T-cell (primary cell): ENCODE measurements at regions of chr7 and their contacts with region 1.

Region 1: DNA sequence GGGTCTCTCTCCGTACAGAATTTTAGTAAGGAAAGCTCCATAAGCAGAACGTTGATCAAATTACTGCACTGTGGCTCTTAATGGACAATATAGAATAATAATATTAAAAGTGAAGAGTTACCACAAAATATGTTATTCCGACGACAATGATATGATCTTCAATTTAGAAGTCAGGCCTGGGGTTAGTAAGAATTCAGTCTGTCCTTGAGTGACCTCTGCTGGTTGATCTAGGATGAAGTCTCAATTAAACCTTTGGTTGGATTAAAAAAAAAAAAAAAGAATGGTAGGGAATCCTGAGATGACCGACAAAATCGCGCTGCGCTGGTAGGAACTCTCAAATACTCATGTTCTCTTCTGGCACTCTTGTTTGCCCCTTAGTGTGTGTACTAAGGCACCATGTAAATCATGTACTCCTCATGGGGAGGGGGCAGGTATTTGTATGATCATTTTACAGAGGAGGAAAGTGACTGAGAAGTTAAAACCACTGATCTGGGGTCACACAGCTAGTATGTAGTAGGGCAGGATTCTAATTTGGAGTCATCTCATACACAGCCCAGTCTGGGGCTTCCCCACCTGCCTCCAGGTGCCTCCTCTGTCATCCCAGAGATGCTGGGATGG is 161.3 kb upstream of the NPVF start:
- DNase-seq: peak in 5 of 35 experiments; percentile 1 to 67 (median 11)
- ATAC-seq: peak in 2 of 4 experiments; percentile 31 to 58
- H3K4me3 ChIP-seq: no peak overlapping the region
- H3K4me3 Mint-ChIP-seq: no peak overlapping the region
- H3K27ac ChIP-seq: no peak overlapping the region
- H3K27ac Mint-ChIP-seq: no peak overlapping the region
- H3K4me1 ChIP-seq: no peaks in the 10 kb centered on the region
- H3K4me1 Mint-ChIP-seq: peaks cover 0 to 7% (median 4%) of the 10 kb centered on the region in 3 donors
- H3K27me3 ChIP-seq: peaks cover 0 to 4% of the 10 kb centered on the region in 2 experiments
- H3K27me3 Mint-ChIP-seq: peaks cover 5 to 10% of the 10 kb centered on the region in 2 donors

Region 2: DNA sequence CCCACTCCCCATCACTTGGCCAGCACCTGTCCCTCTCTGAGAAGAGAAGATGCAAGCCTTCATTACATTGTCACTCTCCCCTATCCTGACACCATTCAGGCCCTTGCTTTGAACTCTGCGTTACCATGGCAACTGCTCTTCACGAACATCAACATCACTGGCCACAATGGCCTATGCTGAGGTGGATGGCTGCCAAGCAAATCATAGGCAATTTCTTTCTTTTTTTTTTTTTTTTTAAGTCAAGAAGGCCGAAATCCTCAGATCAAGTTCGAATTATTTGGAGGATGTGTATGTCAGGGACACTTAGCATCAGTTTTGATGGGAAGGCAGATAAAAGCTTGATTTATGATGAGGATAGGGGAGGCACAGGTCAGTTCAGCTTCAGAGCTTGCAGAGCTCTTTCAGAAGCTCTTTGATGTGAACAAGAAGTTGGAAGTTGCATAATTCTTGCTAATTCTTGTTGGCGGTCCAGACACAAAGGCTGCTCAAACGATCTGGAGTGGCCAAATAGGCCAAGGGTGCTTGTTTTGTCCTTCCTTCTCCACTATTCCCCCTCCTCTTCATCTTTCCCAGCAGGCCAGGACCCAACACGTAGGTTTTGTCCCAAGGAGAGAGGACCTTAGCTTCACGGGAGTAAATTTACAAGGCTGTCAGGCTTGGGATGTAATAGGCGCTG is 18.6 kb after region 1 on chr7:
- CTCF ChIA-PET with region 1: interaction called in 1 of 2 experiments, 10 read pairs
- POLR2A ChIA-PET with region 1: no interaction called
- DNase-seq: no peak
- ATAC-seq: no peak
- H3K4me3 ChIP-seq: no peak overlapping the region
- H3K4me3 Mint-ChIP-seq: no peak overlapping the region
- H3K27ac ChIP-seq: no peak overlapping the region
- H3K27ac Mint-ChIP-seq: no peak overlapping the region
- H3K4me1 ChIP-seq: no peaks in the 10 kb centered on the region
- H3K4me1 Mint-ChIP-seq: no peaks in the 10 kb centered on the region
- H3K27me3 ChIP-seq: no peaks in the 10 kb centered on the region
- H3K27me3 Mint-ChIP-seq: peaks cover 12 to 18% of the 10 kb centered on the region in 2 donors

Region 3: GRCh38 chr7:25429731-25430130 is 40.1 kb after region 1 on chr7:
- CTCF ChIA-PET with region 1: no interaction called
- POLR2A ChIA-PET with region 1: no interaction called
- DNase-seq: no peak
- ATAC-seq: no peak
- H3K4me3 ChIP-seq: no peak overlapping the region
- H3K4me3 Mint-ChIP-seq: no peak overlapping the region
- H3K27ac ChIP-seq: no peak overlapping the region
- H3K27ac Mint-ChIP-seq: no peak overlapping the region
- H3K4me1 ChIP-seq: no peaks in the 10 kb centered on the region
- H3K4me1 Mint-ChIP-seq: peaks cover 0 to 4% (median 0%) of the 10 kb centered on the region in 3 donors
- H3K27me3 ChIP-seq: no peaks in the 10 kb centered on the region
- H3K27me3 Mint-ChIP-seq: peaks cover 2 to 5% of the 10 kb centered on the region in 2 donors

Region 4: GRCh38 chr7:25565949-25566348 is 176.4 kb after region 1 on chr7:
- CTCF ChIA-PET with region 1: interaction called, 15 to 20 read pairs
- POLR2A ChIA-PET with region 1: interaction called in 1 of 2 experiments, 3 read pairs
- DNase-seq: peak; percentile 19 to 84 (median 59)
- ATAC-seq: peak in 2 of 4 experiments; percentile 19 to 66
- H3K4me3 ChIP-seq: no peak overlapping the region
- H3K4me3 Mint-ChIP-seq: no peak overlapping the region
- H3K27ac ChIP-seq: no peak overlapping the region
- H3K27ac Mint-ChIP-seq: no peak overlapping the region
- H3K4me1 ChIP-seq: no peaks in the 10 kb centered on the region
- H3K4me1 Mint-ChIP-seq: peaks cover 4 to 8% (median 4%) of the 10 kb centered on the region in 3 donors
- H3K27me3 ChIP-seq: no peaks in the 10 kb centered on the region
- H3K27me3 Mint-ChIP-seq: peaks cover 4% of the 10 kb centered on the region in 2 donors